Mammary epithelial cell (primary cell): ENCODE measurements at regions of chr21 and their contacts with region 1.

Region 1: DNA sequence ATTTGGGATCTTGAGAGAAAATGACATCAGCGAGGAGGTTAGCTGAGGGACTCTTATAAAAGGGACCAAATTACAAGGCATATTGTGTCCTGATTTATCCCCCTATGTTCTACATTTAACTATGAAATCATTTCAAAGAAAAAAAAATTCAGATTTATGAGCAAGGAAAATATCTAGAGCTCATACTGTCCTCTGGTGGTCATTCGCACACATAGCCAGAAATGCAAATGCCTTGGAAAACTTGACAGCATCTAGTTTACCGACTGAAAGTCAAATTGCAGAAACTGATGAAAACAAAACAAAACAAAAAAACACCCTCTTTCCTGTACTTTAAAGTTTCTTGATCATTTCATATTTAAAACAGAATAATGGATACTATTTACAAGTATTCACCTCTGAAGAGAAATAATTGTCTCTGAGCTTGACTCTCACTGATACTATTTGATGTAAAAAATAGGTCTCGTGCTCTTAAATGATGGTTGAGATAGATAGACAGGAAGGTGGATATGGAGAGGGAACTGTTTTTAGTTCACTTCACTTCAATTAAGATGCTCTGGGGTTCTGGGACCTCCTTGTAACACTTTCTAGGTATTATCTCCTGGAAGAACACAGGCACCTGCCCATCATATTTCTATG is 253.8 kb downstream of the PCP4 start:
- DNase-seq: no peak
- H3K4me3 ChIP-seq: no peak overlapping the region
- H3K27ac ChIP-seq: no peak overlapping the region
- H3K4me1 ChIP-seq: peaks cover 7% of the 10 kb centered on the region
- H3K27me3 ChIP-seq: no peaks in the 10 kb centered on the region
- CTCF ChIP-seq: peak; percentile 94 to 97

Region 2: GRCh38 chr21:39788383-39788782 is 332.7 kb before region 1 on chr21:
- CTCF ChIA-PET with region 1: interaction called, 3 read pairs
- dilution Hi-C with region 1: no loop called
- in situ Hi-C with region 1: no loop called
- intact Hi-C with region 1: loop called (anchors 1 kb)
- DNase-seq: peak; percentile 71
- H3K4me3 ChIP-seq: peak overlapping the region in 1 of 3 experiments; percentile 11
- H3K27ac ChIP-seq: no peak overlapping the region
- H3K4me1 ChIP-seq: no peaks in the 10 kb centered on the region
- H3K27me3 ChIP-seq: no peaks in the 10 kb centered on the region
- CTCF ChIP-seq: peak; percentile 94 to 96

Region 3: GRCh38 chr21:39874759-39875158 is 246.3 kb before region 1 on chr21:
- CTCF ChIA-PET with region 1: no interaction called
- dilution Hi-C with region 1: loop called (anchors 10 kb)
- in situ Hi-C with region 1: loop called (anchors 10 to 25 kb)
- intact Hi-C with region 1: no loop called
- DNase-seq: no peak
- H3K4me3 ChIP-seq: no peak overlapping the region
- H3K27ac ChIP-seq: no peak overlapping the region
- H3K4me1 ChIP-seq: no peaks in the 10 kb centered on the region
- H3K27me3 ChIP-seq: peaks cover 1% of the 10 kb centered on the region
- CTCF ChIP-seq: no peak